Head of caudate nucleus (tissue), 42 donors: ENCODE measurements at regions of chr6 and their contacts with region 1.

Region 1: GRCh38 chr6:33391278-33391921 is at the start of gene KIFC1:
- DNase-seq: peak; percentile 98 to 100 (median 99)

Region 2: GRCh38 chr6:33147807-33148666 is 243.4 kb before region 1 on chr6:
- intact Hi-C with region 1: no loop called
- DNase-seq: peak in 18 of 42 donors; percentile 17 to 72 (median 42)

Region 3: GRCh38 chr6:33235221-33235634 is 156.2 kb before region 1 on chr6:
- intact Hi-C with region 1: no loop called
- DNase-seq: no peak

Region 4: GRCh38 chr6:33410050-33410710 is 18.8 kb after region 1 on chr6:
- intact Hi-C with region 1: loop called (anchors 1 kb)
- DNase-seq: peak; percentile 94 to 99 (median 98)

Region 5: DNA sequence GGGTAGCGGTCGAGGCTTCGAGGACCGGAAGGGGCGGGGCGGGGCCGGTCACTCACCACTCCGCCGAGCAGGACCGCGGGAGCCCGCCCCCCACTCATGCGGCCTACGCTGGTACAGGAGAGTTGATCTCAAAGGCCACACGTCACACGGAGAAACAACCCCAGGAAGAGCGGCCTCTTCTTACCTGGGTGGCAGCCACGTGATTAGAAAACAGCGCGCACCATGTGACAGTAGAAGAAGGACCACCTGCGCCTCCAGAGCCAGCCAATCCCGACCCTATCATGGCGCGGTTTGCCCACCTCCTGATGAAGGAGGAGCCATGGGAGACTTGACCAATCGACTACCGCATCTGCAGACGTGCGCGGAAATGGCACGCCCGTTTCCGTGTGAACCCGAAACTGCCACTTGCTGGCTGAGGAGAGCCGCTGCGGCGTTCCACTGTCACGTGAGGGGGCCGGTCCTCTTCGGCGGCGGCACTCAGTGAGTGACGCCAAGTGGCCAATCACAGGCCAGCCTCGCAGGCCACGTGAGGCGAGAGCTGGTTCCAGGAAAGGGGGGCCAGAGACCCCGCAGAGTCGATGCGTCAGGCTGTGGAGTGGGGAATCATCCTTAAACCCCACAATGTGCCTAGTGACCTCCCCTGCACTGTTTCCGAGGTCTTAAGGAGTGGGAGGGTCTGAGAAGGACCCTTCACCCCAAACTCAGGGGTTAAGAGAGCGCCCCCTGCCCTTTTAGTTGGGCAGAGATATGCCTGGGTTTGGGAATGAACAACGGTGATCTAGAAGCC is 26.7 kb after region 1 on chr6 and contains the start of gene CUTA:
- intact Hi-C with region 1: loop called (anchors 2 kb)
- DNase-seq: peak; percentile 99 to 100 (median 100)

Region 6: DNA sequence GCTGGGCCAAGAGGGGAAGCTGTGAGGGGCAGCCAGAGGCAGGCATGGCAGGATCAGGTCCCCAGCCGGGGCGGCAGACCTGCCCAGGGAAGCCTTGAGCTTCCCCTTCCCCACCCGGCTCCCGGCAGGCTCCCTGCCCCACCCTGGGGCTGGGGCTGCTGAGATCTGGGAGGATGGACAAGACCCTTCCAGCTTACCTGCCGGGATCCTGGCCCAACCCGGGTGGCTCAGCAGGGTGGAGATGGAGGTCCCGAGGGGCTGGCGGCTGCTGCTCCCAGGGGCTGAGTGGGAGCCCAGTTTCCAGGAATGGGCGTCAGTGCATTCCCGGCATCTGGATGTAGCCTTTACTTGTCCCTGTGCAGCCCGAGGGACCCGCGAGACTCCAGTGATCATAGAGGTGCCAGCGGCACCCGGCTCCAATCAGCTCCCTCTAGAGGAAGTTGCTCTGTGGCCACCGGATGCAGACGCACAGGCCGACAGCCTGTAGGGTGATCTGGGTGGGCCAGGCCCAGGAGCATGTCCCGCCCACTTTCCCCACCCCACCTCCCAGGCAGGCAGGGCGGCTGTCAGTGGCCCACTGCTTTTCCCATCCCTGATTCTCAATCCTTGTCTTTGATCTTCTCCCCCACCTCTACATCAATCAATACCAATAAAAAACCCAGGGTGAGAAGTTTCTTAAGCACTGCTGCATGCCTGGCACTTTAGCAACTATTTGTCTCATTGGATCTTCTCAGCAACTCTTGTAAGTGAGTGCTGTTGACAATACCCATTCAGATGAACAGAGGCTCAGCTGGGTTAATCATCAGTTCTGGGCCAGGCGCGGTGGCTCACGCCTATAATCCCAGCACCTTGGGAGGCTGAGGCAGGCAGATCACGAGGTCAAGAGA is 188.7 kb after region 1 on chr6 and contains the start of gene BAK1:
- intact Hi-C with region 1: loop called (anchors 5 kb)
- DNase-seq: peak; percentile 85 to 98 (median 94)